Caco-2 (cell line): ENCODE measurements at regions of chr14 and their contacts with region 1.

Region 1: DNA sequence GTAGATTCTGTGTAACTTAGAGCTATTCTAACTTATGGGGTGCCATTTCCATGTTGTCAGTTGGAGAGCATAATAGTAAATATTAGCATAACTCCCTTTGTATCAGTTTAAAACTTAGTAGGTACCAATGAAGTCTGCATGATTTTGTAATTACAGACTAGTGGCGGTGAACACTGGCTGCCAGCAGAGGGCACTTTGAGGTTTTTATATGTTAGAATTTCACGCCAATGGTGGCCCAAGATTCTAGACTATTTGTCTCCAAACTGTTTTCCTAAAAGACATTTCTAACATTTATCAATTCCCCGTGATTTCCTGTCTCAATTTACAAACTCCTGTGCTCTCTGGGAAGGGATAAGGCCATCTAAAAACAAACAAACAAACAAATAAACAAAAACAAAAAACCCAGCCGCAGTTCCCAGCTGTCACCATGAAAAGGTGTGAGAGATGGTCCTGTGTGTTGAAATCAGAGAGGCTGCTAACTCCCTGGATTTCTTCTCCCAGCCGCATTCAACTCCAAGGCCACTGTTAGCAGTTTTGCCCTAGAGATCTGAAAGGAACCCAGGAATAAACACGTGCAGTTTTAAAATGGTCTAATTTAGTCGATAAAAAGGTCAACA is 57.6 kb downstream of the BRMS1L start:
- DNase-seq: peak in 1 of 2 experiments; percentile 36
- H3K4me3 ChIP-seq: no peak overlapping the region
- H3K4me3 Mint-ChIP-seq: no peak overlapping the region
- H3K27ac Mint-ChIP-seq: no peak overlapping the region
- H3K4me1 ChIP-seq: no peaks in the 10 kb centered on the region
- H3K4me1 Mint-ChIP-seq: no peaks in the 10 kb centered on the region
- H3K27me3 ChIP-seq: no peaks in the 10 kb centered on the region
- H3K27me3 Mint-ChIP-seq: peaks cover 3% of the 10 kb centered on the region
- CTCF ChIP-seq: peak; percentile 68 to 70

Region 2: GRCh38 chr14:35921745-35922144 is 38.0 kb after region 1 on chr14:
- CTCF ChIA-PET with region 1: no interaction called
- POLR2A ChIA-PET with region 1: no interaction called
- intact Hi-C with region 1: no loop called
- DNase-seq: no peak
- H3K4me3 ChIP-seq: no peak overlapping the region
- H3K4me3 Mint-ChIP-seq: no peak overlapping the region
- H3K27ac Mint-ChIP-seq: no peak overlapping the region
- H3K4me1 ChIP-seq: no peaks in the 10 kb centered on the region
- H3K4me1 Mint-ChIP-seq: no peaks in the 10 kb centered on the region
- H3K27me3 ChIP-seq: no peaks in the 10 kb centered on the region
- H3K27me3 Mint-ChIP-seq: peaks cover 3% of the 10 kb centered on the region
- CTCF ChIP-seq: no peak

Region 3: GRCh38 chr14:35944847-35945246 is 61.1 kb after region 1 on chr14:
- CTCF ChIA-PET with region 1: no interaction called
- POLR2A ChIA-PET with region 1: no interaction called
- intact Hi-C with region 1: loop called (anchors 2 kb)
- DNase-seq: peak; percentile 70 to 75
- H3K4me3 ChIP-seq: no peak overlapping the region
- H3K4me3 Mint-ChIP-seq: no peak overlapping the region
- H3K27ac Mint-ChIP-seq: no peak overlapping the region
- H3K4me1 ChIP-seq: no peaks in the 10 kb centered on the region
- H3K4me1 Mint-ChIP-seq: peaks cover 10% of the 10 kb centered on the region
- H3K27me3 ChIP-seq: no peaks in the 10 kb centered on the region
- H3K27me3 Mint-ChIP-seq: no peaks in the 10 kb centered on the region
- CTCF ChIP-seq: peak; percentile 24 to 60

Region 4: DNA sequence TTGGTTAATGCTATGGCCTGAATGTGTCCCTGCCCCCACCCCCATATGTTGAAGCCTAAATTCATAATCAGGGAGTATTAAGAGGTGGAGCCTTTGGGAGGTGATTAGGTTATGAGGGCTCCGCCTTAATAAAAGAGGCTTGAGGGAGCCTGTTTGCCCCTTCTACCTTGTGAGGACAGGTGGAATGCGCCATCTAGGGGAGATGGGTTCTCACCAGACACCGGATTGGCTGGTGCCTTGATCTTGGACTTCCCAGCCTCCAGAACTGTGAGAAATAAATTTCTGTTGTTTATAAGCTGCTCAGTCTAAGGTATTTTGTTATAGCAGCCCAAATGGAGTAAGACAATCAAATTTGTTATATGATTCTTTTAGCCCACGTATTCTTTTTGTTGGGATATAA is 144.4 kb after region 1 on chr14:
- CTCF ChIA-PET with region 1: no interaction called
- POLR2A ChIA-PET with region 1: no interaction called
- intact Hi-C with region 1: loop called (anchors 1 kb)
- DNase-seq: peak in 1 of 2 experiments; percentile 17
- H3K4me3 ChIP-seq: no peak overlapping the region
- H3K4me3 Mint-ChIP-seq: no peak overlapping the region
- H3K27ac Mint-ChIP-seq: no peak overlapping the region
- H3K4me1 ChIP-seq: no peaks in the 10 kb centered on the region
- H3K4me1 Mint-ChIP-seq: no peaks in the 10 kb centered on the region
- H3K27me3 ChIP-seq: no peaks in the 10 kb centered on the region; the same call in 1 of the 2 replicates
- H3K27me3 Mint-ChIP-seq: peaks cover 19% of the 10 kb centered on the region
- CTCF ChIP-seq: no peak

Region 5: DNA sequence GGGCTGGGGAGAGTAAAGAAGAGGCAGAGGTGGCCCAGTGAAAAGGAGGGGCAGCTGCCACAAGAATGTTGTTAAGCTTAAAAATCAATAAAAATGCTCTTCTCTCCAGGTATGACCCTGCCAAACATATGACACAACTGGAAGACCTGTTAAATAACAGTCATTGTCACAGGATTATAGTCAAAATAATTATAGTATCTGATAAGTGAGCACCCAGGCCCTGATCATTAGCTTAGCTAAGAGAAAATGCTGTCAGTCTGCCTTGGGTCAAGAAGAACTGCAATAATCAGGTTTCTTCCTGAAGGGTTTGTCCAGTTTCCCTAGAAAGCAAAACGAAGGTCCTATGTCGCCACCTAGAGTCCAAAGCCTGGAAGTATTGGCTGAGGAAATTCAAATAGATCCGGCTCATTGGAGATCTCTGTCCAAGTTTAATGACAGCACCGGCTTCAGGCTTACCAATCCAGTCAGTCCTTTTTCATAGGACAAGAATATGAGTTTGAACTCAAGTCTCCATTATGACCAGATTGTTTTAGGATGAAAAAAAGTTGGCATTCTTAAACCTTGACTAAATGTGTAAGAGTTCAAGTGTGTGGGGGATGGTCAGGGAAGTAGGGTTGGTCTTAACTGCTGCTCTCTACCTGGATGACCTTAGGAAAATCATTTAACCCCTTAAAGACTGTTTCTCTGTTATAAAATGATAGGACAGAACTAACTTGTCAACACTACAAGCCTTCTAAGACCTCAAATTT is 721.1 kb after region 1 on chr14:
- CTCF ChIA-PET with region 1: no interaction called
- POLR2A ChIA-PET with region 1: no interaction called
- intact Hi-C with region 1: loop called (anchors 5 kb)
- DNase-seq: peak; percentile 69 to 80
- H3K4me3 ChIP-seq: no peak overlapping the region
- H3K4me3 Mint-ChIP-seq: no peak overlapping the region
- H3K27ac Mint-ChIP-seq: no peak overlapping the region
- H3K4me1 ChIP-seq: no peaks in the 10 kb centered on the region
- H3K4me1 Mint-ChIP-seq: peaks cover 8% of the 10 kb centered on the region
- H3K27me3 ChIP-seq: no peaks in the 10 kb centered on the region
- H3K27me3 Mint-ChIP-seq: no peaks in the 10 kb centered on the region
- CTCF ChIP-seq: peak; percentile 71 to 84